ENCODE measurements at regions of chr16 and their contacts with region 1.

Region 1: DNA sequence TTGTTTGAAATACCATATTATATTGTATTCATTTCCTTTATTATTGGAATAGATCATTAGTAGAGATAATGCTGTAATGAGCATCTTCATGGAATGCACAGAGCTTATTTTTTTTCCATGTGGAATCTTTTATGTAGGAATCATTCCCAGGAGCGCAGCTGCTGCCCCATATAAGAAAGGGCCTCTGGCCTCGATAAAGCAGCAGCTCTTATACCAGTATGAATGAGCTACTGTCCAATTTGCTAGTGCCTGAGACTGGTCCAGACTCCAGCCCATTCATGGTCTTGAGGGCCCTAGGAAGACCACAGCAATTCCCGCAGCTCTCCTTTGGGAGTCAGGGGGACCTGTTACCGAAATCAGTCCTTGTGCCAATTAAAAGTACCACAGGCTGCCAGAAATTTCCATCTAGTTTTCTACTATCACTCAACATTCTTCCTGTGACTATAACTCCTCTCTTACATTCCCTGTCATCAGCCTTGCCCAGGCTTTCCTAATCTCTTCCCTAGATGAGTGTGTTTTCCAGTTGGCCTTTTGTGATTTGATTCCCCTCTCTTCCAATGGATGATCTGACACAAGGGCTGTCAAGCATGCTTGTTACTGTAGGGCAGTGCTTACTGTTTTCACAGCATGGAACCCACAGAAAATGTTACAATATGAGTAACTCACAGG is 1.9 kb downstream of the ZNF843 start:
- DNase-seq: no peak
- ATAC-seq: no peak
- H3K4me3 ChIP-seq: no peak overlapping the region
- H3K4me3 Mint-ChIP-seq: no peak overlapping the region
- H3K27ac ChIP-seq: no peak overlapping the region
- H3K27ac Mint-ChIP-seq: no peak overlapping the region
- H3K4me1 ChIP-seq: peaks cover 11 to 12% of the 10 kb centered on the region in 2 donors
- H3K4me1 Mint-ChIP-seq: peaks cover 19% of the 10 kb centered on the region
- H3K27me3 ChIP-seq: peaks cover 0 to 6% (median 2%) of the 10 kb centered on the region in 4 experiments
- H3K27me3 Mint-ChIP-seq: peaks cover 3% of the 10 kb centered on the region
- CTCF ChIP-seq: no peak

Region 2: DNA sequence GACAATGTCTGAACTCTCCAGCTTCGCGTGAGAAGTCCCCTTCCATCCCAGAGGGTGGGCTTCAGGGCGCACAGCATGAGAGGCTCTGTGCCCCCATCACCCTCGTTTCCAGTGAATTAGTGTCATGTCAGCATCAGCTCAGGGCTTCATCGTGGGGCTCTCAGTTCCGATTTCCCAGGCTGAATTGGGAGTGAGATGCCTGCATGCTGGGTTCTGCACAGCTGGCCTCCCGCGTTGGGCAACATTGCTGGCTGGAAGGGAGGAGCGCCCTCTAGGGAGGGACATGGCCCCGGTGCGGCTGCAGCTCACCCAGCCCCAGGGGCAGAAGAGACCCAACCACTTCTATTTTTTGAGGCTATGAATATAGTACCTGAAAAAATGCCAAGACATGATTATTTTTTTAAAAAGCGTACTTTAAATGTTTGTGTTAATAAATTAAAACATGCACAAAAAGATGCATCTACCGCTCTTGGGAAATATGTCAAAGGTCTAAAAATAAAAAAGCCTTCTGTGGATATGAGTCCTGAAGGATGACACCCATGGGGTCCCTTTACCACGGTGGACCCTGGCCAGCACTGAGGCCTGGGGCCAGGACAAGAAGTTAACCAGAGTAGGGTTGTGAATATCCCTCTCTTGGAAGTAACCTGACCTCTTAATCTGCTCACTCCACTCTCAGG is 58.0 kb before region 1 on chr16:
- CTCF ChIA-PET with region 1: interaction called, 10 read pairs
- POLR2A ChIA-PET with region 1: no interaction called
- intact Hi-C with region 1: loop called (anchors 2 kb)
- DNase-seq: peak; percentile 68
- ATAC-seq: peak; percentile 61
- H3K4me3 ChIP-seq: no peak overlapping the region
- H3K4me3 Mint-ChIP-seq: no peak overlapping the region
- H3K27ac ChIP-seq: no peak overlapping the region
- H3K27ac Mint-ChIP-seq: peak overlapping the region; percentile 6
- H3K4me1 ChIP-seq: peaks cover 0 to 7% of the 10 kb centered on the region in 2 donors
- H3K4me1 Mint-ChIP-seq: peaks cover 16% of the 10 kb centered on the region
- H3K27me3 ChIP-seq: peaks cover 0 to 5% (median 0%) of the 10 kb centered on the region in 4 experiments
- H3K27me3 Mint-ChIP-seq: peaks cover 9% of the 10 kb centered on the region
- CTCF ChIP-seq: peak; percentile 74

Measured in B cell (primary cell).